ENCODE measurements at regions of chr20 and their contacts with region 1.

Region 1: DNA sequence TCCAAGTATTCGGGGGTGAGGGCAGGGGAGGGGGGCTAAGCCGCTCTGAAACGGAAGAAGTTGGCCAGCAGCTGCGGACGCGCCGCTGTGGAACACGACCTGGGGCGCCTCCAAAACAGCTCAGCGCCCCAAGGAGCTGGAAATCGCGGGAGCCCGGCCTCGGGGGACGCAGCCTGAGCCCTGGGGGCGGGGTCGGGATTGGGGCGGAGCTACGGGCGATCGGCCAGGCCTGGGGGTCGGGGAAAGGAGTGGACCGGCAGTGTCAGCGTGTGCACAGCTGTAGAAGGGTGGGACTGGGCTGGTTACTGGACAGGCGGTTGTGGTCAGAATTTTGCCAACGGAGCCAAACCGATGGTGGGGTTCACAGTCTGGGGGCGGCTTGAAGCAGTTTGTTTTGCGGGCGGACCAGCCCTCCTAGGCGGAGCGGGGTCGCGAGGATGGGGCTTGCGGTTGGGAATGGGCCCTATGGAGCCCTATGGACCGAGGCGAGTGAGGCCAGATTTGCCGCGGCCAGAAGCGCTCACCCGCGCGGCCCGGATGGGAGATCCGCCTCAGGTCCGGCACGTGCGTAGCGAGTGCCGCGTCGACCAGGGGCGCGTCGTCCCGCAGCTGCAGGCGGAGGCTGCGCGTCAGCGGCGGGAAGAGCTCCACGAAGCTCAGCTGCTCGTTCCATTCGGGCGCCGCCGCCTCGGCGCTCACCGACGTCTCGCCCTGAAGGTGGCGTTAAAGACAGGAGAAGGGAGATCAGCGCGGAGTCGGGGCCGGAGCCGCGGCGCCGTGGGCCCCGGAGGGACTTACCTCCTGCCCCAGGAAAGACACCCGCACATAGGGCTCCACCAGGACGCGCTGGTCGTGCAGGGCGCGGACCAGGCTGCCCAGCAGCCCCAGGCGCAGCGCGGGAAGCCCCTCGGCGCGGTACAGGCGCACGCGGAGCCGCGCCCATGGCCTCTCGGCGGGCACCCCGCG is 14.3 kb upstream of the SPAG4 start:
- DNase-seq: peak; percentile 63
- H3K4me3 ChIP-seq: peak overlapping the region; percentile 27 to 42
- H3K27ac ChIP-seq: no peak overlapping the region
- H3K4me1 ChIP-seq: no peaks in the 10 kb centered on the region
- H3K27me3 ChIP-seq: no peaks in the 10 kb centered on the region
- CTCF ChIP-seq: peak in 3 of 4 experiments; percentile 32 to 68 (median 57)
- POLR2A ChIP-seq: no peak

Region 2: DNA sequence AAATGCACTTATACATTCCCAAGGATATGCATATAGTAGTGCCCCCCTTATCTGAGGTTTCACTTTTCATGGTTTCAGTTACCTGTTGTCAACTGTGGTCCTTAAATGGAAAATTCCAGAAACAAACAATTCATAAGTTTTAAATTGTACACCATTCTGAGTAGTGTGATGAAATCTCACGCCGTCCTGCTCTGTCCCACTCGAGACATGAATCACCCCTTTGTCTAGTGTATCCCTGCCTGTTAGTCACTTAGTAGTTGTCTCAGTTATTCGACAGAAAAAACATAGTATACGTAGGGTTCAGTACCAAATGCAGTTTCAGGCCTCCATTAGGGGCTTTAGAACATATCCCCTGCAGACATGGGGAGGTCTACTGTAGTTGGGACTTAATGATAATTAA is 985.8 kb before region 1 on chr20:
- intact Hi-C with region 1: no loop called
- DNase-seq: no peak
- H3K4me3 ChIP-seq: no peak overlapping the region
- H3K27ac ChIP-seq: no peak overlapping the region
- H3K4me1 ChIP-seq: no peaks in the 10 kb centered on the region
- H3K27me3 ChIP-seq: no peaks in the 10 kb centered on the region
- CTCF ChIP-seq: no peak
- POLR2A ChIP-seq: no peak

Region 3: DNA sequence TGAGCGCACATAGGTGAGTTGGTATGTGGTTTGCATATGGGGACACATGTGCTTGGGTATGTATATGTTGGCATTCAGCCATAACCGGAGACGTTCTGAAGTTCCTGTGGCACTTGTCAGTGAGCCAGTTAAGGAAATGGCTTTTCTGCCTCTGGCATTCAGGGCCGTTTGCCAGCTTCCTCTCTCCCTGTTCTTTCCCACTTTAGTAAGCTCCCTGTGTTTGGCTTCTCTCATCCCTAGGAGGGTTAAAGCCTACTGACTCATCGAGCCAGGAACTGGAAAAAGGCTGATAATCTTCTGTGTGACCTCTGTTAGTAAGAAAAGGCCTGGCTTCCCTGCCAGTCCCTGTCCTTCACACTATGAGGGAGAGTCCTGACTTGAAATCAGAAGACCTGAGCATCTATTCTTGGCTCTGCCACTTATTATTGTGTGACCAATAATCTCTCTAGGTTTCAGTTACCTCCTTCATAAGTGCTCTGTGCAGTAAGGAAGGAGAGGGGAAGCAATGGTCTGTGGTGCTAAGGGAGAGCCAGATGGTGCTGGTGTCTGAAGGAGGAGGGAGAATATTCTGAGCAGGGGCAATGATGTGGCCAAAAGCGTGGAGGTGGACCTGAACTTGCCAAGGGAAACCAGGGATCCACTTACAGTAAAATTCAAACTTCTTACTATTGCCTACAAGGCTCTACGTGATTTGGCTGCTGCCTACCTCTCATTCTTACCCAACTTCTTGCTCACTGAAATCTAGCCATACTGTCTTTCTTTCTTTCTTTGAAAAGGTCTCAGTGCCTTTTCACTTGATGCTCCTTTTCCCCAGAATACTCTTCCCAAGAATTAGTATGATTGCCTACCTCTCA is 693.4 kb before region 1 on chr20:
- intact Hi-C with region 1: no loop called
- DNase-seq: peak; percentile 17
- H3K4me3 ChIP-seq: no peak overlapping the region
- H3K27ac ChIP-seq: peak overlapping the region; percentile 33 to 50
- H3K4me1 ChIP-seq: no peaks in the 10 kb centered on the region
- H3K27me3 ChIP-seq: no peaks in the 10 kb centered on the region
- CTCF ChIP-seq: no peak
- POLR2A ChIP-seq: no peak

Region 4: DNA sequence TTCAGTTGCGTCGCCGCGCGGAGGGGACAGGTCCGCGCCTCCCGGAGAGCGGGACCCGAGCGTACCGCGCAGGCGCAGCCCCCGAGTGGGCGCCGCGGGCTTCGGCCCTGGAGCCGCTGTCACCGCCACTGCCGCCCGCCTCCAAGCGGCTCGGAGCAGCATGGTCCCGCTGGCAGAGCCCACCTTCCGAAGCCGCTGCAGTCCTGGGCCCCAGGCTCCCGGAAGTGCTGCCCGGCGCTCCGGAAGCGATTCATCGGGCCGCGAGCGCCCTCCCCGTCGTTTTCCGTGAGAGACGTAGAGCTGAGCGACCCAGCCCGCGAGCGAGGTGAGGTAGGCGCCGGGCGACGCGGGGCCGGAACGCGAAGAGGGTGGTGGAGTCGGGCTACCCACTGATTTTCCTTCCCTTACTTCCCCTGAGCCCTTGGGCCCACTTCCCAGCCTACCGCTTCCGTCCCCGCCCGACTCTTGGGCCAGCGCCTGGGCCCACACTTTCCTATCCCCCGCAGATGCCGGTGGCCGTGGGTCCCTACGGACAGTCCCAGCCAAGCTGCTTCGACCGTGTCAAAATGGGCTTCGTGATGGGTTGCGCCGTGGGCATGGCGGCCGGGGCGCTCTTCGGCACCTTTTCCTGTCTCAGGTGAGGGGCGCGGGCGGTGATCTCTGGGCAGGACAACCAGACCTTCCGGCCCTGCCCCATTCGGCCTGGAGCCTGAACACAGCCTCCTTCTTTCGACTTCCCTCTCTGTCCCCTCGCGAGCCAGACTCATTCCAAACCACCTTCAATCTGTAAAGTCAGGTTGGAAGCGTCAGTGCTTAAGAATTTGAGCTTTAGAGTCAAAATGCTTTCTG is 98.1 kb after region 1 on chr20 and contains the starts of genes NFS1 and ROMO1:
- intact Hi-C with region 1: loop called (anchors 5 kb)
- DNase-seq: peak; percentile 77
- H3K4me3 ChIP-seq: peak within 1 kb of the TSS; percentile 78 to 92
- H3K27ac ChIP-seq: peak within 1 kb of the TSS; percentile 84 to 85
- H3K4me1 ChIP-seq: no peaks in the 10 kb centered on the region
- H3K27me3 ChIP-seq: no peaks in the 10 kb centered on the region
- CTCF ChIP-seq: peak in 3 of 4 experiments; percentile 22 to 37 (median 34)
- POLR2A ChIP-seq: no peak
- total RNA-seq, gene NFS1: 41.2 to 56.7 TPM
- total RNA-seq, gene ROMO1: 249 to 320 TPM